Head of caudate nucleus (tissue), 42 donors: ENCODE measurements at regions of chr13 and their contacts with region 1.

Region 1: DNA sequence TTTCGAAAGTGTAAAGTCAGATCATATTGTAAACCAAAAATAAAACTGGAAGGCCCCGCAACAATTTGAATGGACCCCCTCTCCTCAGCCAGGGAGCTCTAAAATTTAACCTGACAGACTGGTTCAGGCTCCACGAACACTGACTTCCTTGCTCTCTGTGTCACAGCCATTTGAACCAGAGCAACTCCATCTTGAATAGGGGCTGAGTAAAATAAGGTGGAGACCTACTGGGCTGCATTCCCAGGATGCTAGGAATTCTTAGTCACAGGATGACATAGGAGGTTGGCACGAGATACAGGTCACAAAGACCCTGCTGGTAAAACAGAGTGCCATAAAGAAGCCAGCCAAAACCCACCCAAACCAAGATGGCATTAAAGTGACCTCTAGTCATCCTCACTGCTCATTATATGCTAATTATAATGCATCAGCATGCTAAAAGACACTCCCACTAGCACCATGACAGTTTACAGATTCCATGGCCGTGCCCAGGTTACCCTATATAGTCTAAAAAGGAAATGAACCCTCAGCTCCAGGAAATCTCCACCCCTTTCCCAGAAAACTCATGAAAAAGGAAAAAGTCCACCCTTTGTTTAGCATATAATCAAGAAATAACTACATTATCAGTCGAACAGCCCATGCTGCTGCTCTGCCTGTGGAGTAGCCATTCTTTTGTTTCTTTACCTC is 43.1 kb downstream of the RFXAP start:
- DNase-seq: no peak

Region 2: GRCh38 chr13:36979361-36980050 is 117.4 kb after region 1 on chr13:
- intact Hi-C with region 1: loop called (anchors 5 kb)
- DNase-seq: no peak